ENCODE measurements at regions of chr21 and their contacts with region 1.

Region 1: DNA sequence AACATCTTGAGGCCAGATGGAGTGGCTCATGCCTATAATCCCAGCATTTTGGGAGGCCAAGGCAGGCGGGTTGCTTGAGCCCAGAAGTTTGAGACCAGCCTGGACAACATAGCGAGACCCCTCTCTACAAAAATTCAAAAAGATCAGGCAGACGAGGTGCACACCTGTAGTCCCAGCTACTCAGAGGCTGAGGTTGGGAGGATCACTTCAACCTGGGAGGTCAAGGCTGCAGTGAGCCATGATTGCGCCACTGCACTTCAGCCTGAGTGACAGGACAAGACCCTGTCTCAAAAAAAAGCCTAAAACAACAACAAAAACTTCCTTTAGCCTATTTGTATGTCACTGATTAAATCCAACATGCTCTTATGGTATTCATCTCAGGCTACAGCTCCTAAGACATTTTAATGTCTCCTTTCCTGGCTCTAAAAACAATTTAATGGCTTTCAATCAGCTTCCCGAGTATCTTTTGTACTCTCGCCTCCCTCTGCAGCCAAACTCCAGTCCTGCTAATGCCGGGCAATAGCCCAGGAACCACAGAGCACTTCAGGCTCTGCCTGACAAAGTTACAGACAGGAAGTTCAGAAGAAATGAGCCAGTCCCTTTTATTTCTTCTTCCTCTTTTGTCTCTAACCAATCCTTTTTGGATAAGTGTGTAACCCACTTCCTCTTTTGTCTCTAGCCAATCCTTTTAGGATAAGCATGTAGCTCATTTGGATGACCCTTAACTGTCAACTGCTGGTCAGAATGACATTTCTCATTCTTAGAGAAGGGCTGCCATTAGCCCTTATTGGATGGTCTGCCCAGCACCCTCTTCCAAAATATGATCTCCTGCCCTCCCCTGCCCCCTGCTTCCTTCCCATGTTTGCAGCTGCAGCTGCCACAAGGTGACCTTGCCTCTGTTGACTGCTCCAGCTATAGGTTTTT is 6.6 kb upstream of the DOP1B start:
- DNase-seq: no peak
- ATAC-seq: peak in 3 of 4 experiments; percentile 39 to 54 (median 40)
- H3K4me3 ChIP-seq: no peak overlapping the region
- H3K4me3 Mint-ChIP-seq: peak overlapping the region in 1 of 3 donors; percentile 55
- H3K27ac ChIP-seq: peak overlapping the region; percentile 44
- H3K27ac Mint-ChIP-seq: peak overlapping the region; percentile 93 to 98
- H3K4me1 ChIP-seq: peaks cover 8 to 36% of the 10 kb centered on the region in 2 experiments
- H3K4me1 Mint-ChIP-seq: peaks cover 30 to 50% (median 37%) of the 10 kb centered on the region in 3 donors
- H3K27me3 ChIP-seq: no peaks in the 10 kb centered on the region
- H3K27me3 Mint-ChIP-seq: no peaks in the 10 kb centered on the region

Region 2: GRCh38 chr21:35868005-35868868 is 281.8 kb before region 1 on chr21:
- CTCF ChIA-PET with region 1: no interaction called
- POLR2A ChIA-PET with region 1: no interaction called
- DNase-seq: peak in 1 of 35 experiments; percentile 2
- ATAC-seq: no peak
- H3K4me3 ChIP-seq: no peak overlapping the region
- H3K4me3 Mint-ChIP-seq: no peak overlapping the region
- H3K27ac ChIP-seq: no peak overlapping the region
- H3K27ac Mint-ChIP-seq: no peak overlapping the region
- H3K4me1 ChIP-seq: no peaks in the 10 kb centered on the region
- H3K4me1 Mint-ChIP-seq: no peaks in the 10 kb centered on the region
- H3K27me3 ChIP-seq: peaks cover 2 to 6% of the 10 kb centered on the region in 2 experiments
- H3K27me3 Mint-ChIP-seq: peaks cover 18 to 24% of the 10 kb centered on the region in 2 donors

Region 3: GRCh38 chr21:36104317-36105300 is 45.4 kb before region 1 on chr21:
- CTCF ChIA-PET with region 1: no interaction called
- POLR2A ChIA-PET with region 1: no interaction called
- DNase-seq: peak in 34 of 35 experiments; percentile 22 to 70 (median 47)
- ATAC-seq: peak; percentile 60 to 71 (median 65)
- H3K4me3 ChIP-seq: no peak overlapping the region
- H3K4me3 Mint-ChIP-seq: peak overlapping the region in 2 of 3 donors; percentile 5 to 7
- H3K27ac ChIP-seq: no peak overlapping the region
- H3K27ac Mint-ChIP-seq: no peak overlapping the region
- H3K4me1 ChIP-seq: peaks cover 0 to 8% of the 10 kb centered on the region in 2 experiments
- H3K4me1 Mint-ChIP-seq: peaks cover 0 to 6% (median 4%) of the 10 kb centered on the region in 3 donors
- H3K27me3 ChIP-seq: peaks cover 0 to 18% of the 10 kb centered on the region in 2 experiments
- H3K27me3 Mint-ChIP-seq: peaks cover 29 to 51% of the 10 kb centered on the region in 2 donors

Region 4: DNA sequence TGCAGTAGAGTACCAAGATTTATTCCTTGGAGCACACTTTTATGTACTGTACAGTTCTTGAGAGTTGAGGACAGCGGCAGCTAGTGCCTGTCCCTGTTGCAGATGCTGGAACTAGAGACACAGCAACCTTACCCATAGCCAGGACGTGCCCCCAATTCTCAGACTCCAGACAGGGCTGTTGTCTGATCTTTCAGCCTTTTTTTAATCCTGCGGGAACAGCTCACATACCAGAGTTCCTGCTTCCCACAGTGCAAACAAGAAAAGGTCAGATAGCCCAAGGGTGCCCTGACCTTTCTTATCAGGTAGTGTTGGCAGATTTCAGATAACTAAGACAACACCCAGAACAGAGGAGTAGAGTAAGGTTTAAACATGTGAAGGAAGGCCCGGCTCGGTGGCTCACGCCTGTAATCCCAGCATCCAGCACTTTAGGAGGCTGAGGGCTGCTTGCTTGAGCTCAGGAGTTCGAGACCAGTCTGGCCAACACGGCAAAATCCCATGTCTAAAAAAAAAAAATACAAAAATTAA is 85.1 kb after region 1 on chr21:
- CTCF ChIA-PET with region 1: no interaction called
- POLR2A ChIA-PET with region 1: no interaction called
- DNase-seq: no peak
- ATAC-seq: no peak
- H3K4me3 ChIP-seq: no peak overlapping the region
- H3K4me3 Mint-ChIP-seq: no peak overlapping the region
- H3K27ac ChIP-seq: no peak overlapping the region
- H3K27ac Mint-ChIP-seq: no peak overlapping the region
- H3K4me1 ChIP-seq: peaks cover 0 to 3% of the 10 kb centered on the region in 2 experiments
- H3K4me1 Mint-ChIP-seq: peaks cover 9 to 14% (median 10%) of the 10 kb centered on the region in 3 donors
- H3K27me3 ChIP-seq: no peaks in the 10 kb centered on the region
- H3K27me3 Mint-ChIP-seq: no peaks in the 10 kb centered on the region

Region 5: DNA sequence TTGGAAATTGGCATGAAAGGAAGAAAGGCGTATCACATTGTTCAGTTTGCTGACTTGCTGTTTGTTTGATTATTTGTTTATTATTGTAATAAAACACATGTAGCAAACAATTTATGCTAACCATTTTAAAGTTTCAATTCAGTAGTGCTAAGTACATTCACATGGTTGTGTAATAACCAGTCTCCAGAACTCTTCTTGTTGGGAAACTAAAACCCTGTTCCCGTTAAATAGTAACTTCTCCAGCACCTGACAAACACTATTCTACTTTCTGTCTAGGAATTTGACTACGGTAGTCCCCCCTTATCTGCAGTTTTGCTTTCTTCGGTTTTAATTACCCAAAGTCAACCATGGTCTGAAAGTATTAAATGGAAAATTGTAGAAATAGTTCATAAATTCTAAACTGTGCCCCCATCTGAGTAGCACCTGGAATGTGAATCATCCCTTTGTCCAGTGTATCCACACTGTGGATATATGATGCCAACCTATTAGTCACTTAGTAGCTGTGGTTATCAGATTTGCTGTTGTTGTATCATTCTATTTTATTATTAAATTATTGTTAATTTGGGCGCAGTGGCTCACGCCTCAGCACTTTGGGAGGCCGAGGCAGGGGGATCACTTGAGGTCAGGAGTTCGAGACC is 175.4 kb after region 1 on chr21:
- CTCF ChIA-PET with region 1: interaction called, 7 to 17 read pairs
- POLR2A ChIA-PET with region 1: interaction called in 1 of 2 experiments, 9 read pairs
- DNase-seq: no peak
- ATAC-seq: no peak
- H3K4me3 ChIP-seq: no peak overlapping the region
- H3K4me3 Mint-ChIP-seq: no peak overlapping the region
- H3K27ac ChIP-seq: no peak overlapping the region
- H3K27ac Mint-ChIP-seq: no peak overlapping the region
- H3K4me1 ChIP-seq: peaks cover 20 to 40% of the 10 kb centered on the region in 2 experiments
- H3K4me1 Mint-ChIP-seq: peaks cover 65 to 68% (median 67%) of the 10 kb centered on the region in 3 donors
- H3K27me3 ChIP-seq: no peaks in the 10 kb centered on the region
- H3K27me3 Mint-ChIP-seq: no peaks in the 10 kb centered on the region

Region 6: DNA sequence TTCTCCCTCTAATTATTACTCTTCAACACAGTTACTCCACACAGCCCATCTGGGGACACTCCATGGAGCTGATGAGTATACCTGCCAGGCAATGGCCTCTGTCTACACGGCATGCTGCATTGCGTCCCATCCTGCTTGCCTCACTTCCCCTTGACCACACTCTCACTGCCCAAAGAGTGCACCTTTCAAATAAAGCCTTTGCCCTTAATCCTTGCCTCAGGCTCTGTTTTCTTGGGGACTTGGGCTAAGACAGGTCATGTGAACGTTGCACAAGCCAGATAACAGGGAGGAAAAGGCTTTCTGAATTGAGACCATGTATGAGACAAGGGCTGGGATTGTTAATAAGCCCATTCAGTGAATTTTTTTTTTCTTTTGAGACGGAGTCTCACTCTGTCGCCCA is 508.9 kb after region 1 on chr21:
- CTCF ChIA-PET with region 1: no interaction called
- POLR2A ChIA-PET with region 1: no interaction called
- DNase-seq: no peak
- ATAC-seq: no peak
- H3K4me3 ChIP-seq: no peak overlapping the region
- H3K4me3 Mint-ChIP-seq: no peak overlapping the region
- H3K27ac ChIP-seq: no peak overlapping the region
- H3K27ac Mint-ChIP-seq: no peak overlapping the region
- H3K4me1 ChIP-seq: no peaks in the 10 kb centered on the region
- H3K4me1 Mint-ChIP-seq: no peaks in the 10 kb centered on the region
- H3K27me3 ChIP-seq: peaks cover 8 to 37% of the 10 kb centered on the region in 2 experiments
- H3K27me3 Mint-ChIP-seq: peaks cover 40 to 42% of the 10 kb centered on the region in 2 donors